Left cardiac atrium (tissue), 4 donors: ENCODE measurements at regions of chr7 and their contacts with region 1.

Region 1: GRCh38 chr7:1749864-1750466 is 79.9 kb downstream of the ELFN1 start:
- DNase-seq: peak; percentile 59
- ATAC-seq: peak; percentile 54 to 78

Region 2: DNA sequence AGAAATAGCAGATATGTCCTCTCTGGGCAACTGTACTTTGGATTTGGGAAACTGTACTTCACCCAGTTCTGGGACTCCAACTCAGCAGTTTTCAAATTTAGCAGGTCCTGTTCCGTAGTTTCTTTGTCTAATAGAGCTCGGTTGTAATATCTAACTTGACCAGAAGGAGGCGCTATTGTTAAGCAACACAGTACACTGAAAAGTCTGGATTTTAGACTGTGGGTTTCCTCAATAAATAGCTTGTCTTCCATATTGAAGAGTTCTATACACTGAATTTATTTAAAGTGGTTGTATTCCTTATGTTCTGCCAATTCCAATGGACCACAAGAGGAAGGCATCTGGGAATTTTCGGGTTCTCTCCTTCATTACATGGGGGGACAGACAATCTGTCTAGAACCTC is 40.1 kb before region 1 on chr7:
- intact Hi-C with region 1: loop called in 1 of 2 experiments (anchors 5 kb)
- DNase-seq: no peak
- ATAC-seq: no peak